AG04449 (cell line): ENCODE measurements at regions of chr11 and their contacts with region 1.

Region 1: DNA sequence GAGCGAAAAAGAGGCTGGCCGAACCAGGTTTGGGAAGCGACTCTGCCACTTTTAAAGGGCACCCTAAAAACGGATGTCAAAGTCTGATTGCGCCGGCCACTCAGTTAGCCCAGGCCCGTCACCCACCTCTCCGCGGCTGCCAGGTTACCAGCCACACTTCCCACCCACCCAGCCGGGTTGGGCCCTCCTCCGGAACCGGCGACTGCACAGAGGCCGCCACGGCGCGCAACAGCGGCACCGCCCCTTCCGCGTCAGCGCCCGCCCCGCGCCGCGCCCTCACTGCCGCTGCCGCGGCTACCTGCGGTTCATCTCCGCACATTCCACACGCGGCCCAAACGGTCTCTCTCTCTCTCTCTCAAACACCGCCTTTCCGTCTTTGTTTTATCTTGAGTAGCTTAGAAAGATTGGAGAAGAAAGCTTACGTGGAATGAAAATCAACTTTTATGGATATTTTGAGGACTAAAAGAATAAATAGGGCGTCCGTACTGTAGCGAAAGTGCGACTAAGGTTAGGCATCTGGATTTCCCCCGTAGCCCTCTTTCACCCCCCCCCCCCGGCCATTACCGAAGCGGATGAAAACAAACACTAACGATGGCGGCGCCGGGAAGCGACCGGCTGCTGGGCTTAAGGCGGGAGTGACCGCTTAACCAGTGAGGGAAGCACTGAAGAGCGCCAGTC is at the starts of genes ATG13 and HARBI1:
- DNase-seq: peak; percentile 23
- H3K4me3 ChIP-seq: peak within 1 kb of the TSS; percentile 100
- CTCF ChIP-seq: no peak

Region 2: GRCh38 chr11:46489661-46490560 is 127.2 kb before region 1 on chr11:
- CTCF ChIA-PET with region 1: interaction called, 17 read pairs
- POLR2A ChIA-PET with region 1: no interaction called
- DNase-seq: no peak
- H3K4me3 ChIP-seq: no peak overlapping the region
- CTCF ChIP-seq: peak; percentile 58

Region 3: DNA sequence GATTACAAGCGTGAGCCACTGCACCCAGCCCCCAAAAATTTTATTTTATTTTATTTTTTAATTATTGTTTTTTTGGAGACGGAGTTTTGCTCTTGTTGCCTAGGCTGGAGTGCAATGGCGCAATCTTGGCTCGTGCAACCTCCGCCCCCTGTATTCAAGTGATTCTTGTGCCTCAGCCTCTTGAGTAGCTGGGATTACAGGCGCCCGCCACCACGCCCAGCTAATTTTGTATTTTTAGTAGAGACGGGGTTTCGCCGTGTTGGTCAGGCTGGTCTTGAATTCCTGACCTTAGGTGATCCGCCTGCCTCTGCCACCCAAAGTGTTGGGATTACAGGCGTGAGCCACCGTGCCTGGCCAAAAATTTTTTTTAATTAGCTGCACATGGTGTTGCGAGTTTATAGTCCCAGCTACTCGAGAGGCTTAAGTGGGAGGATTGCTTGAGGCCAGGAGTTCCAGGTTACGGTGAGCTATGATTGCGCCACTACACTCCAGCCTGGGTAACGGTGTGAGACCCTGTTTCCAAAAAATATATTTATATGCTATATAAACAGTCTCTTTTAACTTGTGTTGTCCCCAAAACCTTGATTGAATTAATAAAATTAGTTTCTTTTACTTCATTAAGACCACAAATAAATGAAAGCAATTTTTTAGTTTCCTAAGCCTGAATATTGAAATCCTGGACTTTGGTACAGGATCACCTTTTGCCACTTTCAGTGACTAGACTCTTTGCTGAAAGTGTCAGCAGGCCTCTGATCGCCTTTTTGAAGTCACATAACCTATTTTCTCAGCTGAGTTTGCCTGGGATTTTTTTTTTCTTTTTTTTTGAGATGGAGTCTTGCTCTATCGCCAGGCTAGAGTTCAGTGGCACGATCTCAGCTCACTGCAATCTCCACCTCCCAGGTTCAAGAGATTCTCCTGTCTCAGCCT is 16.4 kb after region 1 on chr11:
- CTCF ChIA-PET with region 1: interaction called, 40 read pairs
- POLR2A ChIA-PET with region 1: no interaction called
- DNase-seq: no peak
- H3K4me3 ChIP-seq: no peak overlapping the region
- CTCF ChIP-seq: no peak

Region 4: DNA sequence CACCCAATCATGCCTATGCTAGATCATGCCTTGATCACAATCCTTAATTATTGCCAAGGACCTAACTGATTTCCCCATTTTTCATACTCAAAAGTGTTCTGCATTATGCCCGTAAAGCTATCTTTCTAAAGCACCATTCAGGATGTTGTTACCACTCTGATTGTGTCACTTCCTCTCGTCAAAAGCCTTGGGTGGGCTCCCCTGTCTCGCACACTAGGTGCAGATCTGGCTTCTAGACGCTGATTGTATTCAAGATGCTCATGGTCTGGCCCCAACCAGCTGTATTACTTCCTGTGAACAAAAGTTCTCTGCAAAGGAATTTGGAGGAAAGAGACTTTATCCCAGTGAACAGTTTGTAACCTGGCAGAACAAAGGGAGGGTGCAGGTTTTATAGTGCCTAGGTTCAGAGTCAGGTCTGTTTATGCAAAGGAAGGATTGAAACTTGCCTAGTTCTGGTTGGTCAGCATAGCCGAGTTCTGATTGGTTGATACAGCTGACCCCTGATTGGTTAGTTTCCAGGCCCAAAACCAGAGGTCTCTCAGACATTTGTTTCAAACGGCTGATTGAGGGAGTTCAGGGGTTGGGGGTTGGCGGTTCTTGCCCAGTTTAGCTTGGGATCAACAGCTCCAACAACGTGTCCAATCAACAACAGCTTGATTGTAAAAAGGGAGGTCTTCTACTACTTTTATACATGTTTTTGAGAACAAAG is 25.6 kb after region 1 on chr11:
- CTCF ChIA-PET with region 1: interaction called, 16 read pairs
- POLR2A ChIA-PET with region 1: no interaction called
- DNase-seq: no peak
- H3K4me3 ChIP-seq: no peak overlapping the region
- CTCF ChIP-seq: no peak

Region 5: DNA sequence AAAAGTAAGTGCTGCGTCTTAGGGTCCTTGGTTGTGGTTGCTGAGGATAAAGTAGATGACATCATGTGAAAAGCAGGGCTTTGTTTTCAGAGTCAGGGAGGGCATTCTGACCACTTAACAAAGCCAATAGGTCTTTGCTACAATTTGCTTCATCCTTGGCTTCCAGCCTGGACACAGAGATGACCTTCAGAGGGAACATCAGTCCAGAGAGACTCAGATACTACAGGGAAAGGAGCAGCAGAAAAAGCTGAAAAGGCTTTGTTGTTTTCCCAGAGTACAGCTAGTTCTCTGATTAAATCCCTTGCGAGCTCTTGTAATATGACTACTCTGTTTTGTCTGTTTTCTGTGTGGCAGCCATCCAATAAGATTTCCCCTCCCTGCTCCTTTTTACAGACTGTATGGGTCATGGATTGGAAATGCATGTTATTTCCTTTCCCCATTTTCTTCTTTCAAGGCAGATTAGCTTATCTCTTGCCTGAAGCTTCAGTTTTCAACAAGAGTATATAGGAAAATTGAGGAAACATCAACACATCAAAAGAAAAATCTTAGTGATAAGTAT is 32.1 kb after region 1 on chr11:
- CTCF ChIA-PET with region 1: interaction called, 16 read pairs
- POLR2A ChIA-PET with region 1: interaction called, 3 read pairs
- DNase-seq: peak; percentile 85
- H3K4me3 ChIP-seq: no peak overlapping the region
- CTCF ChIP-seq: no peak

Region 6: GRCh38 chr11:46755962-46756361 is 138.8 kb after region 1 on chr11:
- CTCF ChIA-PET with region 1: no interaction called
- POLR2A ChIA-PET with region 1: no interaction called
- DNase-seq: no peak
- H3K4me3 ChIP-seq: no peak overlapping the region
- CTCF ChIP-seq: no peak